Left cardiac atrium (tissue), 4 donors: ENCODE measurements at regions of chr17 and their contacts with region 1.

Region 1: DNA sequence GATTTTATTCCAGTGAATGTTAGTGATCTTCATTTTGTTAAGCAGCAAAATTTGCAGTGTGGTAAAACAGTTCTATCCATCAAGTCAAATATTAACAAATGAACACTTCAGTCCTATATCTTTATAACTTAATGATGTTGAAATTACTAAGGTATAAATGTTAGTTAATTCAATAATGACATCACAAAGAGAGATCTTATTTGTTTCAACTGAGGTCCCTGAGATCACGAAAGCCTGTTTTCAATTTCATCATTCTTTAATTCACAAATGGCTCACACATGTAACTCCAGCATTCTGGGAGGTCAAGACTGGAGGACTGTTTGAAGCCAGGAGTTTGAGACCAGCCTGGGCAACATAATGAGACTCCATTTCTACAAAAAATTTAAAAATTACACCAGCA is 13.9 kb downstream of the SMURF2 start:
- DNase-seq: no peak
- ATAC-seq: no peak

Region 2: GRCh38 chr17:64547319-64547718 is 100.9 kb before region 1 on chr17:
- intact Hi-C with region 1: loop called in 1 of 2 experiments (anchors 10 kb)
- DNase-seq: no peak
- ATAC-seq: no peak